ENCODE measurements at regions of chr5 and their contacts with region 1.

Region 1: GRCh38 chr5:74673011-74673790 is 11.8 kb upstream of the HEXB start:
- DNase-seq: no peak
- H3K4me3 ChIP-seq: no peak overlapping the region
- CTCF ChIP-seq: peak; percentile 19

Region 2: GRCh38 chr5:74394916-74395781 is 278.1 kb before region 1 on chr5:
- CTCF ChIA-PET with region 1: no interaction called
- POLR2A ChIA-PET with region 1: no interaction called
- DNase-seq: no peak
- H3K4me3 ChIP-seq: no peak overlapping the region
- CTCF ChIP-seq: no peak

Region 3: DNA sequence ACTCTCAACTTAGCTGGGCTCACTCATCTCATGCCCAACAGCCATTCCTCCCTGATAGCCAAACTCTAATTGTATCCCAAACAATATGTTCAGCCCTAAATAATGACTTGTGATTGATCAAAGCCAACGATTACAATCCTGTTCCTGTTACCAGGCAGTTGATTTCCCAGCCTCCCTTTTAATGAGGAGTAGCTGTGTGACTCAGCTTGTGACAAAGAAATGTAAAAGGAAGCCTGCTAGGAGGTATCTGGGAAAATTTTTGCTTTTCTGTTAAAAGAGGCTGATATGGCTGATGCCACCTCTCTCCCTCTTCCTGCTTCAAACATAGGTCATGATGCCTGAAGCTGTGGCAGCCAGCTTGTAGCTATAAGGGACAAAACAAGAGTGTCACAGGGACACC is 13.1 kb before region 1 on chr5:
- CTCF ChIA-PET with region 1: interaction called, 40 read pairs
- POLR2A ChIA-PET with region 1: no interaction called
- DNase-seq: no peak
- H3K4me3 ChIP-seq: no peak overlapping the region
- CTCF ChIP-seq: no peak

Region 4: DNA sequence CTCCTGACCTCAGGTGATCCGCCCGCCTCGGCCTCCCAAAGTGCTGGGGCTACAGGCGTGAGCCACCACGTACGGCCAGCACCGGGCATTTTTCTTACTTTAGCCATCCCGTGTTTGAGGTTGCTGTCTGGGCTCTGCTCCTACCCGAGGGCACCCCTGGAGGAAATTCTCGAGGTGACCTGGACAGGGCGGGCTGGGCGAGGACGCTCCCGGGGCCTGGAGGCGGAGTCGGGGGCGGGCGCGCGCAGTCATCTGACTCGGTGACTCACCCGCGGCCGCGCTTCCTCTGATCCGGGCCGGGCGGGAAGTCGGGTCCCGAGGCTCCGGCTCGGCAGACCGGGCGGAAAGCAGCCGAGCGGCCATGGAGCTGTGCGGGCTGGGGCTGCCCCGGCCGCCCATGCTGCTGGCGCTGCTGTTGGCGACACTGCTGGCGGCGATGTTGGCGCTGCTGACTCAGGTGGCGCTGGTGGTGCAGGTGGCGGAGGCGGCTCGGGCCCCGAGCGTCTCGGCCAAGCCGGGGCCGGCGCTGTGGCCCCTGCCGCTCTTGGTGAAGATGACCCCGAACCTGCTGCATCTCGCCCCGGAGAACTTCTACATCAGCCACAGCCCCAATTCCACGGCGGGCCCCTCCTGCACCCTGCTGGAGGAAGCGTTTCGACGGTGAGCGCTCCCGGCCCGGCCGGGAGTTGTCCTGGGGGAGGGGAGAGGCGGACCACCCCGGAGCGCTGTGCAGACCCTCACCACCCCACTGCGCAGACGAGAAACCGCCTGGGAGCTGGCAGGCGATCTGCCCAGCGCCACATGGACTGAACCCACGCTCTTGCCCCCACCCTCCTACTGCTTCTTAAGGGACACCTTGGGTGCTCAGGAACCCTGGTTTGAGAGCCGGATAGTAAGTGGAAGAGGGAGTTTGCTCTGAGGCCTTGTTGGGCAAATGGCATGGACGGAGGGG is 12.0 kb after region 1 on chr5 and contains the start of gene HEXB:
- CTCF ChIA-PET with region 1: interaction called, 14 read pairs
- POLR2A ChIA-PET with region 1: no interaction called
- DNase-seq: no peak
- H3K4me3 ChIP-seq: peak within 1 kb of the TSS; percentile 76
- CTCF ChIP-seq: peak; percentile 5

Region 5: GRCh38 chr5:74865804-74866595 is 192.8 kb after region 1 on chr5 and contains the start of gene FAM169A:
- CTCF ChIA-PET with region 1: no interaction called
- POLR2A ChIA-PET with region 1: no interaction called
- DNase-seq: no peak
- H3K4me3 ChIP-seq: peak within 1 kb of the TSS; percentile 55
- CTCF ChIP-seq: no peak

Region 6: GRCh38 chr5:74919487-74919886 is 246.3 kb after region 1 on chr5:
- CTCF ChIA-PET with region 1: interaction called, 141 read pairs
- POLR2A ChIA-PET with region 1: no interaction called
- DNase-seq: no peak
- H3K4me3 ChIP-seq: no peak overlapping the region
- CTCF ChIP-seq: peak; percentile 42

Region 7: GRCh38 chr5:75265731-75266130 is 592.5 kb after region 1 on chr5:
- CTCF ChIA-PET with region 1: interaction called, 14 read pairs
- POLR2A ChIA-PET with region 1: no interaction called
- DNase-seq: peak; percentile 9
- H3K4me3 ChIP-seq: no peak overlapping the region
- CTCF ChIP-seq: peak; percentile 30

Measured in AG04449 (cell line).